Common myeloid progenitor, CD34-positive (primary cell): ENCODE measurements at regions of chr6 and their contacts with region 1.

Region 1: DNA sequence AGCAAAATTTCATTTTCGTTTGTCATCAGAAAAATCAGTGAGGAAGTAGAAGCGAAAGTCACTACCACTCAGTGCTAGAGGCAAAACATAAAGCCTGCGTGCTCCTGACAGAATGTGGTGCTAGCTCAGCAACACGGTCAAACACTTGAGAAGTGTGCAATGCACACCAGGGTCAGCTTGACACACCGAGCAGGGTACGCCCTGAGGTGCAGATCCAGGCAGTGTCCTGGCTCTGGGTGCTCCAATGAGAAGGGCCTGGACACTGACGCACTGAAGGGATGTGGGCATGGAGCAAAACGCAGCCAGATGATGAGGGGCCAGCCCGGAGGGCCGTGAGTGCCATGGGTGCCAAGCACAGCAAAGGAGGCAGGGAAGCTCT is 5.9 kb downstream of the RNASET2 start:
- DNase-seq: no peak
- H3K4me3 ChIP-seq: no peak overlapping the region
- H3K27ac ChIP-seq: no peak overlapping the region
- H3K4me1 ChIP-seq: peaks cover 2 to 16% (median 8%) of the 10 kb centered on the region in 4 experiments
- H3K27me3 ChIP-seq: peaks cover 0 to 10% (median 0%) of the 10 kb centered on the region in 5 experiments

Region 2: DNA sequence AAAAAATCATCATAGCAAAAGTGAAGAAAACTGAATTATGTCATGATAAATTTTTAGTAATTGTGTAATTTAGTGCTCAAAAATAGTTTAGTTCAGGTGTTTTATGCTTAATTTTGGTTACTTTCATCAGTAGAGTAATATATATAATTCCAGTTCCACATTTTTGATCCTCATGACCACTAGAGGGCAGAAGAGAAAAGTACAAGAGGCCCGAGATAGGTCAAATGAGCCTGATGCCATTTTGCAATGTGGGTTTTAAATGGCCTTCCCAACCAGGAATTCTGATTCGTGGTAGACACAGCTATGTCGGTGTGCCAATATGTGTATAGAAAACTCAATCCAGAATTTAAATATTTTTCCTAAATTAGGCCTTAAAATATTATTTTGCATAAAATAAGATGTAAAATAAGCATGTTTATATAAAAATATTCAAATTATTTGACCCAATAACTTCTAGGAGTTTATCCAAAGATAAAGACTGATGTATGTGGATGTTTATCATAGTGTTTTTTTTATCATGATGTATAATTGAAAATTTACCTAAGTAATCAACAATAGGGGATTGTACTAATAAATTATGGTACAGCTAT is 163.6 kb before region 1 on chr6:
- CTCF ChIA-PET with region 1: interaction called, 10 read pairs
- POLR2A ChIA-PET with region 1: no interaction called
- DNase-seq: peak; percentile 63 to 78 (median 73)
- H3K4me3 ChIP-seq: no peak overlapping the region
- H3K27ac ChIP-seq: no peak overlapping the region
- H3K4me1 ChIP-seq: no peaks in the 10 kb centered on the region
- H3K27me3 ChIP-seq: peaks cover 0 to 2% (median 0%) of the 10 kb centered on the region in 5 experiments